Esophagus muscularis mucosa (tissue), 4 donors: ENCODE measurements at regions of chr5 and their contacts with region 1.

Region 1: DNA sequence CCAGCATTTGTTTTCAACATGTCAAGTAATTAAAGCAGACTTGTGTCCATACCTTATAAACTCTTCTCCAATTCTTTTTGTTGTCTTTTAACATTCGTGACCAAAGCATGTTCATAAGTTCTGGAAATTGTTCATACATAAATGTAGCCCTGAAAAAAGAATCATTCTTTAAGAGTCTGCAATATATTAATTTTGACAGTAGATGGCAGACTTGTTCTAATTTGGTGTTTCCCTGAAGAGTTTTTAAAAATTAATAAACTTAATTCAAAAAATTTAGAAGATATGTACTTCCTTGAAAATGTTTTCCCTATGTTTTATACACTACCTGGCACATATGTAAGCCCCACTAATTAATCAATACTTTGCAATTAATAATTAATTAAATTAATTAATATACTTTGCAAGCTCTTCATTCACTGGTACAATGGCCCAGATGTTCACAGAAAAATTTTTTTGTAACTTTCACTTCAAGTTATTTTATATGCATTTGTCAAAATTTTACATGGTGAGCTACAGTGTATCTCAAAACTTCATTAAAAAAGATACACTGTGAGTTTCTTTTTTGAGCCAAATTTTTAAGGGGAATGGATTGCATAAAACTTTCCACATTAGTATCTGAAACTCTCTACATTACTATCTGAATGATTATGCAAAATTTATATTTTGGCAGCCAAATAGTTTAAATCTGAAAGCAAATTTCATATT is 42.1 kb downstream of the CLINT1 start:
- DNase-seq: no peak
- H3K4me3 ChIP-seq: no peak overlapping the region
- H3K27ac ChIP-seq: no peak overlapping the region
- H3K4me1 ChIP-seq: peaks cover 17 to 60% (median 57%) of the 10 kb centered on the region in 4 donors
- H3K27me3 ChIP-seq: no peaks in the 10 kb centered on the region
- CTCF ChIP-seq: peak; percentile 62 to 71 (median 62)
- EP300 ChIP-seq: no peak
- POLR2A ChIP-seq: no peak

Region 2: GRCh38 chr5:157858527-157859226 is 41.8 kb after region 1 on chr5 and contains the start of gene CLINT1:
- intact Hi-C with region 1: loop called (anchors 5 kb)
- DNase-seq: peak; percentile 98
- H3K4me3 ChIP-seq: peak within 1 kb of the TSS; percentile 72 to 98 (median 92)
- H3K27ac ChIP-seq: peak within 1 kb of the TSS; percentile 81 to 92 (median 90)
- H3K4me1 ChIP-seq: peaks cover 35 to 52% (median 45%) of the 10 kb centered on the region in 4 donors
- H3K27me3 ChIP-seq: no peaks in the 10 kb centered on the region
- CTCF ChIP-seq: peak in 1 of 3 experiments; percentile 12
- EP300 ChIP-seq: no peak
- POLR2A ChIP-seq: peak; percentile 60
- total RNA-seq, gene CLINT1: 84.3 to 118 (median 107) TPM

Region 3: DNA sequence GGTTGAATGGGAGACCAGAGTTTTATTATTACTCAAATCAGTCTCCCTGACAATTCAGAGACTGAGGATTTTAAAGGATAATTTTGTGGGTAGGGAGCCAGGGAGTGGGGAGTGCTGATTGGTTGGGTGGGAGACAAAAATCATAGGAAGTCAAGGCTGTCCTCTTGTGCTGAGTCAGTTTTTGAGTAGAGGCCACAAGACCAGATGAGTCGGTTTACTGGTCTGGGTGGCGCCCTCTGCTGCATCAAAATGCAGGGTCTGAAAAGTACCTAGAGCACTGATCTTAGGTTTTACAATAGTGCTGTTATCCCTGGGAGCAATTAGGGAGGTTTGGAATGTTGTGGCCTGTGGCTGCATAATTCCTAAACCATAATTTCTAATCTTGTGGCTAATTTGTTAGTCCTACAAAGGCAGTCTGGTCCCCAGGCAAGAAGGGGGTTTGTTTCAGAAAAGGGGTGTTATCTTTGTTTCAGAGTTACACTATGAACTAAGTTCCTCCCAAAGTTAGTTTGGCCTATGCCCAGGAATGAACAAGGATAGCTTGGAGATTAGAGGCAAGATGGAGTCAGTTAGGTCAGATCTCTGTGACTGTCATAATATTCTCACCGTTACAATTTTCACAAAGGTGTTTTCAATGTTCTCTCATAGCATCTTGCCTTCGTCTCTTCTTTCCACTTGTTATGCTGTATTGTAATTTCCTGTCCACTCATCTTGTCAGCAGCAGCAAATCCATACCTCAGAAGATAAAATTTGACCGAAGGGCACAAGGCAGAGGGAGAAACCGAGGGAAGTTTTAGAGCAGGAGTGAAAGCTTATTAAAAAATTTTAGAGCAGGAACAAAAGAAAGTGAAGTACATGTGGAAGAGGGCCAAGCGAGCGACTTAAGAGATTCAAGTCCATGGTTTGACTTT is 101.3 kb after region 1 on chr5:
- intact Hi-C with region 1: loop called (anchors 10 kb)
- DNase-seq: no peak
- H3K4me3 ChIP-seq: no peak overlapping the region
- H3K27ac ChIP-seq: no peak overlapping the region
- H3K4me1 ChIP-seq: peaks cover 28 to 51% (median 34%) of the 10 kb centered on the region in 4 donors
- H3K27me3 ChIP-seq: no peaks in the 10 kb centered on the region
- CTCF ChIP-seq: peak; percentile 38 to 49 (median 42)
- EP300 ChIP-seq: no peak
- POLR2A ChIP-seq: no peak

Region 4: DNA sequence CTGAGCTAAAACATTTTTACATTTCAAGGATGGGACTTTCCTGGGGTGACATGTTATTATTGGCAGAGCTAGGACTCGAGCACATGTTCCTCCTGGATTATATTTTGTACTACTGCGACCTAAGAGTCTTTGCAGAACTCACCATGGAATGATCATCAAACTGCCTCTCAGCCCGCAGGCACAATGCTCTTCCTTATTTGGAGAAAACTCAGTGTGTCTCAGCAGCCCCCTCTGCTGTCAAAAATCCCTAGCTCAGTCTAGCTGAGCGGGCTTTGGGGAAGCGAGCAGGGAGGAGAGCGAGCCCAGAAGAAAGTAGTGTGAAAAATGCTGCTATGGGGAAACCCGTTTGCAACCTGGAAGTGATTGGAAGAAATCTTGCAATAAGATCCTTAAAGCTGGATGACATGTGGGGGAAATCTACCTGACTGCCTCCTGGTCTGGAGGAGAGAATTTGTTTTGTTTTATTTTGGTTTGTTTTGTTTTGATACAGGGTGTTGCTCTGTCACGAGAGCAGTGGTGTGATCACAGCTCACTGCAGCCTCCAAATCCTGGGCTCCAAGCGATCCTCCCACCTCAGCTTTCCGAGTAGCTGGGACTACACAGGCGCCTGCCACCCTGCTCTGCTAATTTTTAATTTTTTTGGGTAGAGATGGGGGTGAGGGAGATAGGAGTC is 132.0 kb after region 1 on chr5:
- intact Hi-C with region 1: loop called (anchors 2 kb)
- DNase-seq: peak; percentile 97
- H3K4me3 ChIP-seq: peak overlapping the region in 3 of 4 donors; percentile 3 to 31 (median 14)
- H3K27ac ChIP-seq: peak overlapping the region; percentile 72 to 82 (median 74)
- H3K4me1 ChIP-seq: peaks cover 4 to 18% (median 15%) of the 10 kb centered on the region in 4 donors
- H3K27me3 ChIP-seq: no peaks in the 10 kb centered on the region
- CTCF ChIP-seq: peak; percentile 84 to 93 (median 90)
- EP300 ChIP-seq: no peak
- POLR2A ChIP-seq: no peak

Region 5: DNA sequence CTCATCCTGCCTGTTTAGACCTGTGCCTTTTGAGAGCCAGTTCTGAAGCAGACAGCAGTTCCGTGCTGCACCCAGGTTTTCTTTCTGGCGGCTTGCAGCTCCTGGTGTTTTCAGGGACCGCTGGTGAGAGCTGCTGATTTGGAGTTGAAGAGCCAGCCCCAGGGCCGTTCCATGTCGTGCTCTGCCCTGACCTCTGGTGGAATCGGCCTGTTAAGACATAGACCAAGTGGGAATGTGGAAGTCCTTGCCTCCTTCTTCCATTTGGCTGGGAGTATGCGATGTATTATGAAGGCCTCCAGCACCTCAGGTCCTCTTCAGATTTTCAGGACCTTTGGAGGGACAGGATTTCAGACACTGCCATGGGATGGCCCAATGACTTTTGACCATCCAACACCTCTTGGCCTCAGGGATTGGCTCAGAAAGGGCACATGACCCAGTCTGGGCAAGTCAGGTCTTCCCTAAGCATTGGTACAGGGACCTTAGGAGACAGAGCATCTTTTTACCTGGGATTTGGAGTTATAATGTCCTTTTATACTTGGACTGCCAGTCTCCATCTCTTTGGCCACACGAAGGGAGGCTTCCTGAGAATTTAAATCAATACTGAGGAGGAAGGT is 178.2 kb after region 1 on chr5:
- intact Hi-C with region 1: loop called (anchors 2 kb)
- DNase-seq: no peak
- H3K4me3 ChIP-seq: no peak overlapping the region
- H3K27ac ChIP-seq: no peak overlapping the region
- H3K4me1 ChIP-seq: peaks cover 3 to 21% (median 9%) of the 10 kb centered on the region in 4 donors
- H3K27me3 ChIP-seq: no peaks in the 10 kb centered on the region
- CTCF ChIP-seq: peak; percentile 81 to 84 (median 82)
- EP300 ChIP-seq: no peak
- POLR2A ChIP-seq: no peak